Panc1 (cell line): ENCODE measurements at regions of chr12 and their contacts with region 1.

Region 1: DNA sequence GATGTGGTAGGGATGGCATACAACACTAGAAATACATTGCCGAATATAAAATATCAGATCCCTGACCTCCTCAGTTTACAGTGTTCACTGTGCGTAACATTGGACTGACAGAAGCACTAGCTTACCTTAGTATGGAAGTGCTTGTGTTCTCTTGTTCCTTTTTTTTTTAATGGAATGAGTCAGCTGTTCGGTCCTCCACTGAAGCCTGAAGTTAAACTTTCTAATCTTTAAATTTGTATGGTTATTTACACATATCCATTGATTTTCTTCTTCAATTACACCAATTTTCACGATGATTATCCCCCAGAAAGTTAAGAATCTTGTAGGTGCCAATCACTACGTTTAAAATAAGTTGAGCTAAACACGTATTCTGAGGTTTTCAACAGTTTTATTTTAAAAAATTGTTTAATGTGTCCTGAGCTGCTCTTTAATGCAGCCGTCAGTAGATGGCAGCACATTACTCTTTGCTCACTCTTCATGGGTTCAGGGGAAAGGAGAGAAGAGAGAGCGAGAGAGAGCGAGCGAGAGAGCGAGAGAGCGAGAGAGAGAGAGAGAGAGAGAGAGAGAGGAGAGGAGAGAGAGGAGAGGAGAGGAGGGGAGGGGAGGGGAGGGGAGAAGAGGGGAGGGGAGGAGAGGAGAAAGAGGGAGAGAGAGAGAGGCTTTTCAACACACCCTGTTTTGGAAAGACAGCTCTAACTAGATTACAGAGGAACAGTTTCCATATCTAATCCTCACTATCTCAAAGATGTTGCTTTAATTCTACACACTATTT is 134.7 kb upstream of the SCAF11 start:
- DNase-seq: peak; percentile 54
- ATAC-seq: peak; percentile 98
- H3K4me3 ChIP-seq: no peak overlapping the region
- H3K27ac ChIP-seq: no peak overlapping the region; the same call in 1 of the 2 replicates
- H3K4me1 ChIP-seq: peaks cover 9% of the 10 kb centered on the region; the same call in 1 of the 2 replicates
- H3K27me3 ChIP-seq: no peaks in the 10 kb centered on the region; the same call in 1 of the 2 replicates
- CTCF ChIP-seq: peak; percentile 64

Region 2: DNA sequence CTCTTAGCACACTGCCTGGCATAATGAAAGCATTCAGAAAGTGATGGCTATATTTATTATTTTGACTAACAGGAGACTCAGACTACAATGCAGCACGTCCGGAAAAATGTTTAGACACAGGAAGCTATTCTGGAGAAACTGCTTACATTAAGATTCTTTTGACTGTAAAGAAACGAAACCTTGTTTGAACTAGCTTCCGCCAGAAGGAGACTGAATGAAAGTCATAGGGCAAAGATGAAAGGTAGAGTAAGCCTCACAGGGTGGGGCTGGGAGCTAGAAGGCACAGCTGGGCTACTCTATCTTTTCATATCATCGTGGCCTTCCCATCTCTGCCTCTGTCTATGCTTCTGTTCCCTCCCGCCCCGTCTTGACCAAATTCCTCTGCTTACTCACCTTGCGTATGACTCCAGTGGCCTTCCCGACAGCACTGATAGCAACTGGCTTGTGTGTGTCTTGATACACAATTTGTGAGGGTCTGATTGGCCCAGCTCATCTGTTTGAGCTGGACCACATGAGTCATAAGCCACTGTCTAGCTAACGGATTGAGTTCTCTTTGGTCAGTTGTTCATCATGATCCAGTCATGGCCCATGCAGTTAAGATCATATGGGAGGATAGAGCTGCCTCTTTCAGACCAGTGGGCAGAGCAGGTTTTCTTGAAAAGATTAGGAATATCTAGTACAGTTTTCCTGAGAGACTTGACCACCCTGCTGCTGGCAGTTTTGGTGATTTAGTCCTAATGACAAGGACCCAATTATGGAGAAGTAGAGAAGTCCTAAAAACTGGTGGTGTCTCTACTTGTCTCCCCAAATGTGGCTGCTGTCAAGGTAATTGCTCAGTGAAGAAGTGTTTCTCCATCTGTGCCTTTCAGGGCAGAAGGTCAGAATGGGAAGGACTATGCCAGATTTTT is 399.1 kb after region 1 on chr12:
- CTCF ChIA-PET with region 1: interaction called, 17 read pairs
- POLR2A ChIA-PET with region 1: no interaction called
- in situ Hi-C with region 1: no loop called
- intact Hi-C with region 1: no loop called
- DNase-seq: peak; percentile 94
- ATAC-seq: peak; percentile 84
- H3K4me3 ChIP-seq: peak overlapping the region; percentile 3 to 19; a peak in 3 of 4 replicates
- H3K27ac ChIP-seq: peak overlapping the region; percentile 60
- H3K4me1 ChIP-seq: peaks cover 7% of the 10 kb centered on the region
- H3K27me3 ChIP-seq: no peaks in the 10 kb centered on the region
- CTCF ChIP-seq: no peak

Region 3: GRCh38 chr12:46944088-46944487 is 819.1 kb after region 1 on chr12:
- CTCF ChIA-PET with region 1: interaction called, 10 read pairs
- POLR2A ChIA-PET with region 1: no interaction called
- in situ Hi-C with region 1: no loop called
- intact Hi-C with region 1: no loop called
- DNase-seq: no peak
- ATAC-seq: no peak
- H3K4me3 ChIP-seq: no peak overlapping the region
- H3K27ac ChIP-seq: no peak overlapping the region
- H3K4me1 ChIP-seq: 0 out of 2 replicates have a peak, but pooled peaks cover 2% of the 10 kb centered on the region
- H3K27me3 ChIP-seq: no peaks in the 10 kb centered on the region
- CTCF ChIP-seq: peak; percentile 26; the same call in 1 of the 2 replicates